ENCODE measurements at regions of chr1 and their contacts with region 1.

Region 1: GRCh38 chr1:209769171-209769904 is 13.5 kb downstream of the TRAF3IP3 start:
- DNase-seq: peak; percentile 75
- H3K4me3 Mint-ChIP-seq: no peak overlapping the region
- H3K27ac Mint-ChIP-seq: no peak overlapping the region
- H3K4me1 Mint-ChIP-seq: peaks cover 39% of the 10 kb centered on the region
- H3K27me3 Mint-ChIP-seq: no peaks in the 10 kb centered on the region

Region 2: DNA sequence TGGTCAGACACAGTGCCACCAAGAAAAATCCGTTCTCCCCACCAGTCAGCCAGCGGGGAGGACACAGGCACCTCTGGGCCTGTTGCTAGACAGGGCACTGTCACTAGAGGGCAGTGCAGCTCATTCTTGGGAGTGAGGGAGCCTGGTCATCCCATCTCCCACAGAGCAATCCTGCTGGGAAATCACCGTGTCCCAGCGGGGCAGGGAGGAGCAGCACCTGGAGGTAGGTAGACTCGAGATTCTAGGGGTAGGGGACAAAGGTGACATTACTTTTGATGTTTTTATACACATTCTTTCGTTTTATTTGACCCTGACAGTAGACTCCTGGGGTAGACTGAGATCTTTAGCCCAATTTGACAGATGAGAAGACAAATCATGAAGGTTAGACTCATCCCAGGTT is 192.5 kb before region 1 on chr1:
- intact Hi-C with region 1: loop called (anchors 2 kb)
- DNase-seq: peak; percentile 49
- H3K4me3 Mint-ChIP-seq: no peak overlapping the region
- H3K27ac Mint-ChIP-seq: no peak overlapping the region
- H3K4me1 Mint-ChIP-seq: peaks cover 7% of the 10 kb centered on the region
- H3K27me3 Mint-ChIP-seq: peaks cover 25% of the 10 kb centered on the region

Region 3: GRCh38 chr1:209723756-209724693 is 45.3 kb before region 1 on chr1:
- intact Hi-C with region 1: loop called (anchors 1 kb)
- DNase-seq: peak; percentile 37
- H3K4me3 Mint-ChIP-seq: peak overlapping the region; percentile 53
- H3K27ac Mint-ChIP-seq: peak overlapping the region; percentile 100
- H3K4me1 Mint-ChIP-seq: peaks cover 68% of the 10 kb centered on the region
- H3K27me3 Mint-ChIP-seq: no peaks in the 10 kb centered on the region

Region 4: DNA sequence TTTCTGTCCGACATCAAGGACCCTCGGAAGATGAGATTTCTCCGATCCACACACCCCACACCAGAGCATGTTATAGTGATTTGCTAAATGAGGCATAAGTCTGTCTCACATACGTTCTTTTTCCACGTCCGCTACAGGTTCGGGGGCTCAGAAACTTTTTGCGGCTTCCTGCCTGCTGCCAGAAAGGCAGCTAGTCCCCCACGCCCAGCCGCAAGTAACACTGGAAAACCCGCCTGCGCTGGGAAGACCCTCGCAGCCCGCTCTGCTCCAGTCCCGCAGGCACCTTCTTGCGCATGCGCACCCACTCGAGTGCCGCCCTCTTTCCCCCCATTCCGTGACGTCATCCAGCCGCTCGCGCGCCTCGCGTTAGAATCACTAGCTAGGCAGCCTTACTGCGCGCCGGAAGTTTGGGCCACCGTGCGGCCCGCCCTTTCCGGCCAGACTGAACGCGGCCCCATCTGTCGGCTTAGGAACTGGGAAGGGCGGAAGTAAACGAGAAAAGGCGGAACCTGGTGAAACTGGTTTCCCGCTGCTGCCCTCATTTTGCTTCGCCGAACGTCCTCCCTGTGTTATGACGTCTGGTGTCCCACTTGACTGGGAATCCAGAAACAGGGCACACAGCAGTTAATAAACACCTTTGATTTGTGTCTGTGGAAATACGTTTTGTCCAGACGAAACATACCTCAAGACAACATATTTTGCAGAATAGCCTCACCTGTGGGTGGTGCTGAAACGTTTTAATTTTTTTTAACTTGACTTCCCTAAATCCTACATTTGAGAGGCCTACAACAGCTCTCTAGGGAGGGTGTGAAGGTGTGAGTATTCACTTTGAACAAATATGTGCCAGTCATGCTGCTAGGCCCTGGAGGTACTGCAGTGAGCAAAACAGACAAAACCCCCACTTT is 15.2 kb after region 1 on chr1 and contains the start of gene C1orf74:
- intact Hi-C with region 1: loop called (anchors 1 kb)
- DNase-seq: peak; percentile 100
- H3K4me3 Mint-ChIP-seq: peak within 1 kb of the TSS; percentile 90
- H3K27ac Mint-ChIP-seq: peak within 1 kb of the TSS; percentile 96
- H3K4me1 Mint-ChIP-seq: peaks cover 71% of the 10 kb centered on the region
- H3K27me3 Mint-ChIP-seq: no peaks in the 10 kb centered on the region
- total RNA-seq, gene C1orf74: 2.9 and 3.2 TPM in 2 replicates

Region 5: DNA sequence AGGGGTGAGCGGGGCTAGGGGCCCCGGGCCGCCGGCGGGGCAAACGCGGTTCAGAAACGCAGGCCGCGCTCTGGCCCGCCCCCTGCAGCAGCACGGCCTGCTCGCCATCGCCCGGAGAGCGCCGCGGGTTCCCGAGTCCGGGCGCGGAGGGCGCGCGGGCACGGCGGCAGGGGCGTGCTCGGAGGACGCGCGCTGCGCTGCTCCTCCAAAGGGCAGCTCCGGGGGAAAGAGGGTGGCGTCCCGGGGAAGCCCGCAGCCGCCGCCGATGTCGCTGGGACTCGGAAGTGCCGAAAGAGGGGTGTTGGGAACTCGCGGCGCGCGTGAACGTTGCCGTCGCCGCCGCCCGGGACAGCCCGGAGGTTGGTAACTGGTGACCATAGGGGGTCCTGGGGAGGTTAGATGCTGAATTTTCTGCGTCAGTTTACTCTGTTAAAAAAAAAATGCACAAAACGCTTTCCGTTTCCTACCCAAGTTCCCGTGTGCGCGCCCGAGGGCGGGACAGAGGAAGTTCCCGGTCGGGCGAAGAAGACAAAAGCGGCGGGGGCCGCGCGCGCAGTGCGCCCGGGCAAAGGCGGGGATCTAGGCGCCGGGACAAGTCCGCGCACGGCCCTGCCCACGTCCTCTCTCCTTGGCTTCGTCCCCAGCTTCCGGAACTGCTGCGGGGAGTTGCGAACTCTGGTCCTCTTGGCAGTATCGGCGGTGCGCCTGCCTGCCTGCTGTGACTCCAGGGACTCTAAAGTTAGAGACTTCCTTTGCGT is 559.6 kb after region 1 on chr1 and contains the start of gene HHAT:
- intact Hi-C with region 1: loop called (anchors 5 kb)
- DNase-seq: peak; percentile 52
- H3K4me3 Mint-ChIP-seq: peak within 1 kb of the TSS; percentile 90
- H3K27ac Mint-ChIP-seq: peak within 1 kb of the TSS; percentile 95
- H3K4me1 Mint-ChIP-seq: peaks cover 42% of the 10 kb centered on the region
- H3K27me3 Mint-ChIP-seq: peaks cover 12% of the 10 kb centered on the region
- total RNA-seq, gene HHAT: 0.67 and 0.73 TPM in 2 replicates

Region 6: DNA sequence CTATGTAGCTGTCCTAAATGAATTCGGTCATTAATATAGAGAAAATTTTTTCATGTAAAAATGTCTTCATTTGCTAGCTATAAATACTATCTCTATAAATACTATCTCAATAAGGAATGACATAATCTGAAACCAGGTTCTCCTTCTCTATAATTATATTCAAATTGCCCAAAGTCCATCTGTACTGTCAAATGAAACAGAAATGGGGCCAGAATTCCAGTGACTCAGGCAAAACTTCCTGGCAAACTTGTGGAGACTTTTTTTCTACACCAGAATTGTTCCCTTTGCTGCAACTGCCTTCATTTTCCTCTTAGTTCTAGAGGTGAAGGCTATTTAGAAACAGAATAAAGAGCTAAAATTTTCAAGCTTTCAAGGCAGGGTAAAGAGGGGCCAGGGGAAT is 1212.2 kb after region 1 on chr1:
- intact Hi-C with region 1: no loop called
- DNase-seq: no peak
- H3K4me3 Mint-ChIP-seq: no peak overlapping the region
- H3K27ac Mint-ChIP-seq: no peak overlapping the region
- H3K4me1 Mint-ChIP-seq: no peaks in the 10 kb centered on the region
- H3K27me3 Mint-ChIP-seq: no peaks in the 10 kb centered on the region

Measured in activated T-helper 1 cell treated with anti-CD3 and anti-CD28 coated beads, Interleukin-12 subunit alpha, Interleukin-12 subunit beta, Interleukin-2, Interleukin-4 antibody, amounts not matched to agents 30 ng/mL and 10 ng/mL and 1 ng/mL, durations not matched to agents 14 hours and 24 hours and 36 hours (primary cell).